Dorsolateral prefrontal cortex (tissue), 120 donors: ENCODE measurements at regions of chr7 and their contacts with region 1.

Region 1: DNA sequence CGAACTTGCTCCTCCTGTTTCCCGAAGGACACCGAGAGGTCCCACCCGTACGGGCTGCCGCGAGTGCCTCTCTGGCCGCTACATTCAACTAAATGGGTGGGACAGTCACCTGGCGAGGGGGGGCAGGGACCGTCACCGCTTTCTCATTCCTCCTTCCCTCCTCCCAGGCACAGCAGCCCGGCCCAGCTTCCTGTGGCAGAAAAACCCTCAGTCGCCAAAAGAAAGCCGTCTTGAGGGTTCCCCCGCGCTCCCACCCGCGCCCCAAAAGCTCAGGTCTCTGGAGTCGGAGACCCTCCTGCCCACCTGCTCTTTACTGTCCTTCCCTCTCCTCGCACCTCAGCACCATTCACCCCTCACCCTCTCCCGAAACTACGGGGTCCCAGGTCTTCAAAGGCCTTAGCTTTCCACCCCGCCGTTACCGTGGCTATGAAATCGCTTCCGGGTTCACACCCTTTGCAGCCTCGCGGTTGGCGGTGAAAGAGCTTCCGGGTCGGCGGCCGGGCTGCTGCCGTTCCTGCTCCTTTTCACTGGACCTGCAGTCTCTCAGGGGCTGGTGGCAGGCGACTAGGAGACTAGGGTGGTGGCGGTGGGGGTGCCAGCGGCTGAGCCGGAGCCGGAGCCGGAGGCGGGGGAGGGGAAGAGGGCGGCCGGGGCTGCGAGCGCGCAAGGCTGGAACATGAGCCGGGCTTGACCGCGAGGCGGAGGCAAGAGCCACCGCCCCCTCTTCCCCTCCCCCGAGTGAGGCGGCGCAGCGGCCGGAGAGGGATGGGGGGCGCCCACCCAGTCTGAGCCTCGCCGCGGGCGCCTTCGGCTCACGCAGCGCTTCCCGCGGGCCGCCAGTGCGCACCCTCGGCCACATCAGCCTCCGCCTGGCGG is at the starts of genes ANKIB1 and KRIT1:
- DNase-seq: peak; percentile 83 to 95 (median 90)
- H3K4me3 ChIP-seq: peak within 1 kb of the TSS; percentile 71 to 98 (median 89)
- H3K27ac ChIP-seq: peak within 1 kb of the TSS; percentile 74 to 96 (median 91)
- H3K27me3 ChIP-seq: no peaks in the 10 kb centered on the region
- CTCF ChIP-seq: peak in 46 of 56 donors; percentile 10 to 64 (median 40)
- total RNA-seq, gene ANKIB1: 111 to 248 (median 163) TPM
- total RNA-seq, gene KRIT1: 40.9 to 99.0 (median 70.3) TPM

Region 2: GRCh38 chr7:92134271-92135051 is 111.3 kb before region 1 on chr7 and contains the start of gene CYP51A1:
- intact Hi-C with region 1: loop called in 1 of 2 experiments (anchors 10 kb)
- DNase-seq: peak; percentile 88 to 97 (median 94)
- H3K4me3 ChIP-seq: peak within 1 kb of the TSS; percentile 66 to 100 (median 95)
- H3K27ac ChIP-seq: peak within 1 kb of the TSS; percentile 85 to 100 (median 97)
- H3K27me3 ChIP-seq: no peaks in the 10 kb centered on the region
- CTCF ChIP-seq: peak in 33 of 56 donors; percentile 1 to 51 (median 25)
- total RNA-seq, gene CYP51A1: 49.1 to 122 (median 85.7) TPM

Region 3: GRCh38 chr7:92178927-92179924 is 66.5 kb before region 1 on chr7 and contains the start of gene LRRD1:
- intact Hi-C with region 1: loop called (anchors 10 kb)
- DNase-seq: peak; percentile 79 to 94 (median 87)
- H3K4me3 ChIP-seq: peak within 1 kb of the TSS; percentile 52 to 88 (median 73)
- H3K27ac ChIP-seq: peak within 1 kb of the TSS; percentile 13 to 98 (median 90)
- H3K27me3 ChIP-seq: no peaks in the 10 kb centered on the region
- CTCF ChIP-seq: peak; percentile 86 to 100 (median 98)
- total RNA-seq, gene LRRD1: 0.21 to 4.2 (median 0.92) TPM in 117 of 120 experiments, not detected in the others

Region 4: GRCh38 chr7:92282930-92283329 is 37.2 kb after region 1 on chr7:
- intact Hi-C with region 1: no loop called
- DNase-seq: no peak
- H3K4me3 ChIP-seq: no peak overlapping the region
- H3K27ac ChIP-seq: peak overlapping the region in 1 of 59 donors; percentile 42
- H3K27me3 ChIP-seq: no peaks in the 10 kb centered on the region
- CTCF ChIP-seq: no peak

Region 5: GRCh38 chr7:92303761-92304160 is 58.0 kb after region 1 on chr7:
- intact Hi-C with region 1: loop called in 1 of 2 experiments (anchors 5 kb)
- DNase-seq: no peak
- H3K4me3 ChIP-seq: no peak overlapping the region
- H3K27ac ChIP-seq: no peak overlapping the region
- H3K27me3 ChIP-seq: no peaks in the 10 kb centered on the region
- CTCF ChIP-seq: no peak

Region 6: DNA sequence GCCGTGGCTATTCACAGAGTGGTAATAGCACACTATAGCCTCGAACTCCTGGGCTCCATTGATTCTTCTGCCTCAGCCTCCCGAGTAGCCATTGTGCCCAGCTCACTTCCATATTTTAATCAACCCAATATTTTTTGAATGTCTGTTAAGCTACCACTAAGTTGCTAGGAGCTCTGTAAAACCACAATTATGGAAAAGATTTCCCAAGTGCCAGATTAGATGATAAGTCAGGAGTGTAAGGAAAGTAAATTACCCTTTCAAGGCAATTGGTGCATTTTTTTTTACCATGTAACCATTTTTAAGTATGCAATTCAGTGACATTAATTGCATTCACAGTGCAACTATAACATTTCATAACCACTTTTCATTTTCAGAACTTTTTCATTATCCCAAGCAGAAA is 114.1 kb after region 1 on chr7:
- intact Hi-C with region 1: loop called in 1 of 2 experiments (anchors 10 kb)
- DNase-seq: no peak
- H3K4me3 ChIP-seq: no peak overlapping the region
- H3K27ac ChIP-seq: peak overlapping the region in 36 of 59 donors; percentile 1 to 93 (median 55)
- H3K27me3 ChIP-seq: no peaks in the 10 kb centered on the region
- CTCF ChIP-seq: no peak

Region 7: DNA sequence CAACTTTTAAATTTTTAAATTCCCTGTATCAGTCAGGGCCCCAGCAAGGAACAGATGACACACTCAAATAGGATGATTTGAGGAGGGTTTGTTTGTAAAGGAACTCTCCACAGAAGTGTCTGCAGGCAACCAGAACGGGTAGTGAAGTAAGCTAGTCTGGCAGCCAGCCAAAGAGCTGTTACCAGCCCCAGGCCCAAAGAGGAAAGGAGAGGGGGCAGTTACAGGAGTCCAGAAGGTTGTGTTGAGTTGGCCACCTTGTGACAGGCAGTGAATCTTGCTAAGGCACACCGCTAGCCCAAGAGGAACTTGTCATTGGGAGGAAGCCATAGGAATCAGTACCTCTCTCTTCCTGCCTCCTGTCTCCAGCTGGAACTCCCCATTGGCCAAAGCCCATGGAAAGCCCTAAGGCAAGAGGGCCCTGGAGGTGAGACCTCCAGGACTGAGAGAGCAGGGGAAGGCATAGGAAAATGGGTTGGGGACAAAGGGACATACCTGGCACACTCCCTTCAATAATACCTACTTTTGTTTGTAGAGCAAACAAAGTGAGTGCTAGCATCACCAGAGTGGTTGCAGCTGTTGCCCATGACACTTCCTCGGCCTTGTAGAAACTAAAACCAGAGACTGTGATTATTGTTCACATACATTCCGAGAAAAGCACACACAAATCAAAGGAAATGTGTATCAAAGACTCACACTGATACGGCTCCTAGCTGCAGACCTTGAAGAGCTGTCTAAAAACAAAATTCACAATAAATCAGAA is 176.1 kb after region 1 on chr7:
- intact Hi-C with region 1: loop called (anchors 1 to 2 kb)
- DNase-seq: no peak
- H3K4me3 ChIP-seq: no peak overlapping the region
- H3K27ac ChIP-seq: no peak overlapping the region
- H3K27me3 ChIP-seq: peaks cover 0 to 7% (median 0%) of the 10 kb centered on the region in 45 donors
- CTCF ChIP-seq: no peak

Region 8: DNA sequence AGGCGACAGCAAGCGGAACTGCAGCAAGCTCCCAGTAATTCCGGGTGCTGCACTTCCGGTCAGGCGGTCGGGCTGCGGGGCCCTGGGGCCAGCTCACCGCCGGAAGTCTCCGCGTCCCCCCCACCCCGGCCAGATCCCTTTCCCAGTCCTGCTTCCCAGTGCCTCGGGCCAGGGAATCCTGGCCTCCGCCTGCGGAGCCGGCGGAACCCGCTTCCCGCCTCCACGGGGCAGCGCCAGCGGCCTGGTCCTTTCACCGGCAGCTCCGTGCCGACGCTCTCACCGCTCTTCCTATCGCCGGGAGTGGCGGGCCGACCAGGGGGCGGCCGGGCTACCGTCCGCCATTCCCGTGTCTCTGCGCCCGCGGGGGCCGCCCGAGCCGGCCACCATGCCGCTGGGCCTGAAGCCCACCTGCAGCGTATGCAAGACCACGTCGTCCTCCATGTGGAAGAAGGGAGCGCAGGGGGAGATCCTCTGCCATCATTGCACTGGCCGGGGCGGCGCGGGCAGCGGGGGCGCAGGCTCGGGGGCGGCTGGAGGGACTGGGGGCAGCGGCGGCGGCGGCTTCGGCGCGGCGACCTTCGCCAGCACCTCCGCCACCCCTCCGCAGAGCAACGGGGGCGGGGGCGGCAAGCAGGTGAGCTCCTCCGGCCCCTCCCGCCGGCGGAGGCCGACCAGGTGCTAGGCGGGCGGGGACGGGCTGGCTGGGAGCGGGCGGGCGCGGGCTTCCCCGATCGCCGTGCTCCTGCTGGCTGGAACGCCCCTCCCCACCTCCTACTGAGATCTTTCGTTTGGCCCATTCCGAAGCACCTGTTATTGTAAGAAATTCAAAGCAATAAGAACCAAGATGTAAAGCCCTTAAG is 201.8 kb after region 1 on chr7 and contains the start of gene GATAD1:
- intact Hi-C with region 1: loop called (anchors 1 kb)
- DNase-seq: peak; percentile 80 to 95 (median 93)
- H3K4me3 ChIP-seq: peak within 1 kb of the TSS; percentile 59 to 100 (median 96)
- H3K27ac ChIP-seq: peak within 1 kb of the TSS; percentile 29 to 98 (median 91)
- H3K27me3 ChIP-seq: no peaks in the 10 kb centered on the region
- CTCF ChIP-seq: peak in 54 of 56 donors; percentile 92 to 99 (median 98)
- total RNA-seq, gene GATAD1: 31.7 to 95.3 (median 53.2) TPM